Caco-2 (cell line): ENCODE measurements at regions of chr14 and their contacts with region 1.

Region 1: GRCh38 chr14:54347997-54348611 is 48.7 kb upstream of the CDKN3 start:
- DNase-seq: peak in 1 of 2 experiments; percentile 67
- H3K4me3 ChIP-seq: no peak overlapping the region
- H3K4me3 Mint-ChIP-seq: no peak overlapping the region
- H3K27ac Mint-ChIP-seq: no peak overlapping the region
- H3K4me1 ChIP-seq: peaks cover 5% of the 10 kb centered on the region
- H3K4me1 Mint-ChIP-seq: peaks cover 16% of the 10 kb centered on the region
- H3K27me3 ChIP-seq: no peaks in the 10 kb centered on the region
- H3K27me3 Mint-ChIP-seq: no peaks in the 10 kb centered on the region
- CTCF ChIP-seq: peak; percentile 62 to 81

Region 2: GRCh38 chr14:53295985-53296582 is 1052.0 kb before region 1 on chr14:
- CTCF ChIA-PET with region 1: interaction called, 9 read pairs
- POLR2A ChIA-PET with region 1: no interaction called
- intact Hi-C with region 1: loop called (anchors 2 kb)
- DNase-seq: peak in 1 of 2 experiments; percentile 53
- H3K4me3 ChIP-seq: no peak overlapping the region
- H3K4me3 Mint-ChIP-seq: no peak overlapping the region
- H3K27ac Mint-ChIP-seq: no peak overlapping the region
- H3K4me1 ChIP-seq: no peaks in the 10 kb centered on the region
- H3K4me1 Mint-ChIP-seq: no peaks in the 10 kb centered on the region
- H3K27me3 ChIP-seq: no peaks in the 10 kb centered on the region
- H3K27me3 Mint-ChIP-seq: peaks cover 5% of the 10 kb centered on the region
- CTCF ChIP-seq: peak; percentile 49 to 65

Region 3: GRCh38 chr14:53539489-53540126 is 808.5 kb before region 1 on chr14:
- CTCF ChIA-PET with region 1: interaction called, 5 read pairs
- POLR2A ChIA-PET with region 1: no interaction called
- intact Hi-C with region 1: loop called (anchors 1 kb)
- DNase-seq: peak; percentile 82 to 87
- H3K4me3 ChIP-seq: no peak overlapping the region
- H3K4me3 Mint-ChIP-seq: no peak overlapping the region
- H3K27ac Mint-ChIP-seq: peak overlapping the region; percentile 79
- H3K4me1 ChIP-seq: peaks cover 42% of the 10 kb centered on the region
- H3K4me1 Mint-ChIP-seq: peaks cover 20% of the 10 kb centered on the region
- H3K27me3 ChIP-seq: no peaks in the 10 kb centered on the region
- H3K27me3 Mint-ChIP-seq: no peaks in the 10 kb centered on the region
- CTCF ChIP-seq: peak; percentile 75 to 86

Region 4: GRCh38 chr14:54329082-54329695 is 18.9 kb before region 1 on chr14:
- CTCF ChIA-PET with region 1: interaction called, 14 read pairs
- POLR2A ChIA-PET with region 1: no interaction called
- intact Hi-C with region 1: no loop called
- DNase-seq: peak; percentile 51 to 53
- H3K4me3 ChIP-seq: no peak overlapping the region
- H3K4me3 Mint-ChIP-seq: no peak overlapping the region
- H3K27ac Mint-ChIP-seq: no peak overlapping the region
- H3K4me1 ChIP-seq: no peaks in the 10 kb centered on the region
- H3K4me1 Mint-ChIP-seq: peaks cover 5% of the 10 kb centered on the region
- H3K27me3 ChIP-seq: no peaks in the 10 kb centered on the region
- H3K27me3 Mint-ChIP-seq: no peaks in the 10 kb centered on the region
- CTCF ChIP-seq: peak; percentile 70 to 76

Region 5: DNA sequence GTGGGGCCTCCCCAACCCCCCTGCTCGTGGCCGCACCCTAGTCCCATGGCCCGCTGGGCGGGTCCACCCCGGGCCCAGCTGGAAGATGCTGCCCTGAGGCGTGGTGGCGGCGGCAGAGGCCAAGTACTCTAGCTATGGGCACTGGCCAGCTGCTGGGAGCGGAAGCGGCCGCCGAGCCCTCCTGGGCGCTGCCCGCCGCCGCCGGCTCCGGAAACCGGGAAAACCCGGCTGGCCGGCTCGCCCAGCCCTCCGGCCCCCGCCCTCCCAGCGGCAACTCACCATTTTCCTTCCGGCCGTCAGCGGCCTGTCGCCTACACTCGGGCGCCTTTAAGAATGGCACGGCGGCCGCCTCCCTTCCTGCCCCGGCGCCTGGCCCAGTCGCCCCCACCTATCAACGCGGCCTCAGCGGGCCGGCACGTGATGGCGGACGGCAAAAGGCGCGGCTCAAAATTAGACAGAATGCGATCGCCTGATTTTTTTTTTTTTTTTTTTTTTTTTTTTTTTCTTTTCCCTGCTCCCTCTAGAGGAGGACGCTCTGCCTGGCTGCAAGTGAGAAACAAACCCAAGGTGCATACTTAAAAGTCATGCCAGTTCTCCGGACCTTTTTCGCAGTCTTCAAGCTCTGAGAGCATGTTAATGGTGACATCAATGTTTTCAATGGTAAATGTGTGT is 140.7 kb after region 1 on chr14 and contains the start of gene GMFB:
- CTCF ChIA-PET with region 1: no interaction called
- POLR2A ChIA-PET with region 1: no interaction called
- intact Hi-C with region 1: no loop called
- DNase-seq: peak; percentile 92
- H3K4me3 ChIP-seq: peak within 1 kb of the TSS; percentile 86
- H3K4me3 Mint-ChIP-seq: peak within 1 kb of the TSS; percentile 74
- H3K27ac Mint-ChIP-seq: peak within 1 kb of the TSS; percentile 78
- H3K4me1 ChIP-seq: peaks cover 24% of the 10 kb centered on the region
- H3K4me1 Mint-ChIP-seq: peaks cover 18% of the 10 kb centered on the region
- H3K27me3 ChIP-seq: no peaks in the 10 kb centered on the region
- H3K27me3 Mint-ChIP-seq: no peaks in the 10 kb centered on the region
- CTCF ChIP-seq: peak in 1 of 2 experiments; percentile 57
- total RNA-seq, gene GMFB: 65.5 and 67.4 TPM in 2 replicates